ENCODE measurements at regions of chr18 and their contacts with region 1.

Region 1: GRCh38 chr18:10953672-10954071 is 195.7 kb downstream of the PIEZO2 start:
- DNase-seq: peak; percentile 91
- H3K4me3 ChIP-seq: peak overlapping the region; percentile 11
- H3K27ac ChIP-seq: peak overlapping the region; percentile 99
- H3K4me1 ChIP-seq: peaks cover 79% of the 10 kb centered on the region
- CTCF ChIP-seq: 0 out of 2 replicates have a peak, but pooled peaks have one; percentile 11

Region 2: DNA sequence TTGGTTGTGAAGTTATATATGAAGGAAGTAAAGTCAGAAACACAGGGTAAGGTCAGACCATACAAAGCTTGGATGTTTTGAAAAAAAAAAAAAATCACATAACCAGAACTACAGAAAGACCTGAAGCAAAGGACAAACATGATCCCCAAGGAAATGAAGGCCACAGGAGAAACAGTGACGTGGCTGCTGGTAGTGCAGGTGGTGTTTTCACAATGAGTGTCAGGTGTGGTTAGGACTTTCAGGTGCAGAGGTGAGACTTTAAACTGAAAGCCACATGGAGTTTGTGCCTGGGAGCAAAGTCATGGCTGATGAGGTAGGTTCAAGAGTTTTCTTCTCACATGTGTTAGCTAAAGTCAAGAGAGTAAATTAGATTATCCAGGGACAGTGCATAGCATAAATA is 75.0 kb before region 1 on chr18:
- CTCF ChIA-PET with region 1: no interaction called
- POLR2A ChIA-PET with region 1: interaction called, 10 read pairs
- intact Hi-C with region 1: loop called (anchors 1 kb)
- DNase-seq: peak; percentile 78
- H3K4me3 ChIP-seq: no peak overlapping the region
- H3K27ac ChIP-seq: peak overlapping the region; percentile 64
- H3K4me1 ChIP-seq: peaks cover 61% of the 10 kb centered on the region
- CTCF ChIP-seq: no peak

Region 3: GRCh38 chr18:11040823-11041656 is 87.4 kb after region 1 on chr18:
- CTCF ChIA-PET with region 1: interaction called, 3 read pairs
- POLR2A ChIA-PET with region 1: interaction called, 5 read pairs
- intact Hi-C with region 1: loop called (anchors 1 kb)
- DNase-seq: peak; percentile 74
- H3K4me3 ChIP-seq: no peak overlapping the region
- H3K27ac ChIP-seq: no peak overlapping the region
- H3K4me1 ChIP-seq: peaks cover 9% of the 10 kb centered on the region
- CTCF ChIP-seq: peak; percentile 97

Region 4: DNA sequence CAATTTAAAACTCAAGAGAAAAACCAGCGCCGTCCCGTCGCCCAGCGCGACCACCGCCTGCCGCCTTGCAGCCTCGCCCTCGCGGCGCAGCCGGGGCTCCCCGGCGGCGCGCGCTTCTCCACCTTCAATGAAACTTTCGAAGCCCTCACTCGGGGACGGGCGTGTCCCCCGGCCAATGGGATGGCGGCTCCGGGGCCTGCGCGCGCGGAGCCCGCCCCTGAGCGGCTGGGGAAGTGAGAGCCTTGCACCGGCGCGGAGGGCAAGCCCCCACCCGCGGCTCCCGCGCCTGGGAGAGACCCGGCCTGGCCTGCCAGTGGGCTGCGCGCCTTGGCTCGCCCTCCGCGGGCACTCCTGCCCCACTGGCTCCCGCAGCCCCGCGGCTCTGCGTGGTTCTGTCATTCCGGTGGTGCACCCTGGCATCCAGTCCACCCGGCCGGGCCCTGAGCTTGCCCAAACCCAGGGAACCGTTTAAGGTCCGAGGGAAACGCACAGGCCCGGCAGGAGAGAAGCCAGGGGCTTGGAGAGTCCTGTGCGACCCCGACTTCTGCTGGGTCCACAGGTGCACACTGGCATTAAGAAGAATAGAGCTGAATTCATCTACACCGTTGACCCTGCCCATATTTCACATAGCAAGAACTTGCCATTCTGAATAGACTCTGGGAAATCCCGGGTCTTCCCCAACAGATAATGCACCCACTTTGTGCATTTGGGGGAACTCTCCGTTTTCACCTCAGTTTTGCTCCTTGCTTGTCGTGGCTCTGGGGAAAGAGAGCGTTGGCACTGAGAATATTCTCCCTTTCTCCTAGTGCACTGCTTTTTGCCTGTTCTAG is 196.0 kb after region 1 on chr18 and contains the start of gene PIEZO2:
- CTCF ChIA-PET with region 1: no interaction called
- POLR2A ChIA-PET with region 1: interaction called, 3 read pairs
- intact Hi-C with region 1: loop called (anchors 2 kb)
- DNase-seq: no peak
- H3K4me3 ChIP-seq: no peak within 1 kb of the TSS
- H3K27ac ChIP-seq: no peak within 1 kb of the TSS
- H3K4me1 ChIP-seq: no peaks in the 10 kb centered on the region
- CTCF ChIP-seq: no peak
- total RNA-seq, gene PIEZO2: 0.95 and 2.6 TPM in 2 replicates

Region 5: GRCh38 chr18:11512096-11513030 is 558.7 kb after region 1 on chr18:
- CTCF ChIA-PET with region 1: no interaction called
- POLR2A ChIA-PET with region 1: no interaction called
- intact Hi-C with region 1: loop called (anchors 5 kb)
- DNase-seq: peak; percentile 54
- H3K4me3 ChIP-seq: peak overlapping the region; percentile 49
- H3K27ac ChIP-seq: peak overlapping the region; percentile 84
- H3K4me1 ChIP-seq: peaks cover 21% of the 10 kb centered on the region
- CTCF ChIP-seq: peak; percentile 62

Measured in OCI-LY7 (cell line).